WTC11 (cell line): ENCODE measurements at regions of chr2 and their contacts with region 1.

Region 1: GRCh38 chr2:71530641-71531332 is 77.4 kb downstream of the DYSF start:
- DNase-seq: peak; percentile 61
- ATAC-seq: peak; percentile 85
- H3K4me3 Mint-ChIP-seq: no peak overlapping the region
- H3K27ac Mint-ChIP-seq: no peak overlapping the region
- H3K4me1 Mint-ChIP-seq: peaks cover 22% of the 10 kb centered on the region
- H3K27me3 Mint-ChIP-seq: no peaks in the 10 kb centered on the region
- CTCF ChIP-seq: peak; percentile 54

Region 2: GRCh38 chr2:71545572-71546274 is 14.9 kb after region 1 on chr2:
- CTCF ChIA-PET with region 1: interaction called, 15 read pairs
- POLR2A ChIA-PET with region 1: no interaction called
- DNase-seq: peak; percentile 69
- ATAC-seq: peak; percentile 92
- H3K4me3 Mint-ChIP-seq: no peak overlapping the region
- H3K27ac Mint-ChIP-seq: no peak overlapping the region
- H3K4me1 Mint-ChIP-seq: no peaks in the 10 kb centered on the region
- H3K27me3 Mint-ChIP-seq: no peaks in the 10 kb centered on the region; the same call in none of the 2 replicates
- CTCF ChIP-seq: peak; percentile 61